Right ventricle myocardium superior (tissue), 1 donor: ENCODE measurements at regions of chr2 and their contacts with region 1.

Region 1: GRCh38 chr2:237421542-237422116 is 7.7 kb upstream of the COL6A3 start:
- DNase-seq: peak; percentile 88
- ATAC-seq: peak; percentile 85

Region 2: GRCh38 chr2:237171396-237171795 is 250.2 kb before region 1 on chr2:
- intact Hi-C with region 1: no loop called
- DNase-seq: no peak
- ATAC-seq: peak; percentile 85

Region 3: DNA sequence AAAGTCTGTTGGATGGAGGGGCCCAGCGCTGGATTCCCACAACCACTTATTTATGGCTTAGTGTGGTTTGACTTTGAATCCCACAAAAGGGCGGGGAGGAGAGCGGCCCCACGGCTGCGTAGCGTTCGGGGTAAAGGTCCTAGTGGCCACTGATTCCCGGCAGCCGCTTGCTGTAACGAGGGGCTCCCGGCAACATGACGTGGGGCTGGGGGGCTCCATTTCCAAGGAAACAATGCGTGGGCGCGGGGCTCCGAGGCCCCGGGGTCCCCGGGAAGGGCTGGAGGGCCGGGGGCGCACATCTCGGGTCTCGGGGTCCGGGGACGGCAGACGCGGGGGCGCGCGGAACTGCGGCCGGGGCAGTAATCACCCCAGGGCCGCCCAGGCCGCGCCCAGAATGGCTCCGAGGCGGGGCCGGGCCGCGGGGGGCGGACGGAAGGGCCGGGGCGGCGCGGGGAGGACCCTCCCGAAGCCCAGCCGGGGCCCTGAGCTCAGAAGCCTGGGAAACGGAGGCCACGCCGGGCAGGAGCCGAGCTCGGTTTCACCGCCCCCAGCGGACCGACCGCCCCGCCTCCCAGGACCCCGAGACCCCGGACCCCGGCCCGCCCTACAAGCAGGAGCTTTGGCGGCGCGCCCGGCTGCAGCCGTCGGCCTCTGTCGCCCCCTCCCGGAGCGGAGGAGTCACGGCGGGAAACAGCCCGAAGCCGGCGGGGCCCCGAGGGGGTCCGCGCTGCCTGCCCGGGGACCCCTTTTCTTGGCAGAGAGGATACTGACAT is 53.5 kb after region 1 on chr2:
- intact Hi-C with region 1: loop called (anchors 5 kb)
- DNase-seq: peak; percentile 91
- ATAC-seq: peak; percentile 93